A549 (cell line): ENCODE measurements at regions of chr3 and their contacts with region 1.

Region 1: GRCh38 chr3:14426063-14426620 is 23.7 kb downstream of the SLC6A6 start:
- DNase-seq: no peak
- ATAC-seq: no peak
- H3K4me3 ChIP-seq: no peak overlapping the region
- H3K27ac ChIP-seq: peak overlapping the region in 1 of 2 experiments; percentile 67; a peak in 2 of 6 replicates
- H3K4me1 ChIP-seq: peaks cover 75% of the 10 kb centered on the region
- CTCF ChIP-seq: no peak
- EP300 ChIP-seq: no peak
- POLR2A ChIP-seq: no peak
- RAD21 ChIP-seq: no peak

Region 2: DNA sequence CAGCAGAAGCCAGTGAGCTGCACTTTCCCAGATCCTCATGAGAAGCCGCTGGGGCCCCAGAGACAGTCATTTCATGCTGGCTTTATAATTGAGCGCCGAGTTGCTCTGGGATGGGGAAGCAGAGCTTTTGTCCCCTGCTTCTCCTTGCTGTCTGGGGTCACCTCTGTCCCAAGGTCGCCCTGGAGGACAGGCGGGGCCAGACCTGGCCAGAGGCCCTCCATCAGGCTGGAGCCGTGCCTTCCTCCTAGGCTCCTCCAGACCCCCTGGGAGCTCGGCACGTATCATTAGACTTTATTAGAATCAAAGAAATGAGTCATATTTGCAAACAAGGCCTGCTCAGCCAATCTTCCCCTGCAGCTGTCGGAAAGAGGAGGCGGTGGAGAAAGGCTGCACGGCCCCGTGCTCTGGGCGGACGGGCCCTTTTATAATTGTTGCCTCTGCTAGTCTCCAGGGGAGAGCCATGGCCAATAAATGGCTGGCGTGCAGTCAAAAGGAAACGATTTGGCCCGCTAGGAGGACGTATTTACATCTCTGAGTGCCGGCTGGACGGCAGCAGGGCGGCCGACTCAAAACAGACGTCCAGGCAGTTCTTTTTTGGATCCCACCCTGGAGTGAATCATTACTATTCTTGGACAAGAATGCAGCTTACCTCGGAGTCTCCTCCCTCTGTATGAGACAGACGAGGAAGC is 26.7 kb after region 1 on chr3:
- CTCF ChIA-PET with region 1: interaction called, 16 read pairs
- POLR2A ChIA-PET with region 1: interaction called, 4 read pairs
- DNase-seq: peak; percentile 83 to 88
- ATAC-seq: peak; percentile 69 to 78
- H3K4me3 ChIP-seq: peak overlapping the region; percentile 32; the same call in 1 of the 3 replicates
- H3K27ac ChIP-seq: peak overlapping the region; percentile 90 to 97
- H3K4me1 ChIP-seq: peaks cover 59% of the 10 kb centered on the region
- CTCF ChIP-seq: no peak
- EP300 ChIP-seq: peak; percentile 4 to 59; a peak in 2 of 5 replicates
- POLR2A ChIP-seq: no peak
- RAD21 ChIP-seq: peak in 1 of 2 experiments; percentile 33; a peak in 2 of 5 replicates